A549 (cell line): ENCODE measurements at regions of chr19 and their contacts with region 1.

Region 1: GRCh38 chr19:50922317-50922853 is 11.2 kb upstream of the KLK4 start:
- DNase-seq: peak; percentile 89 to 91
- ATAC-seq: peak; percentile 97 to 100
- H3K4me3 ChIP-seq: no peak overlapping the region
- H3K27ac ChIP-seq: no peak overlapping the region
- H3K4me1 ChIP-seq: peaks cover 14% of the 10 kb centered on the region; the same call in 1 of the 3 replicates
- CTCF ChIP-seq: peak; percentile 96
- EP300 ChIP-seq: no peak
- POLR2A ChIP-seq: no peak
- RAD21 ChIP-seq: peak; percentile 95 to 97

Region 2: DNA sequence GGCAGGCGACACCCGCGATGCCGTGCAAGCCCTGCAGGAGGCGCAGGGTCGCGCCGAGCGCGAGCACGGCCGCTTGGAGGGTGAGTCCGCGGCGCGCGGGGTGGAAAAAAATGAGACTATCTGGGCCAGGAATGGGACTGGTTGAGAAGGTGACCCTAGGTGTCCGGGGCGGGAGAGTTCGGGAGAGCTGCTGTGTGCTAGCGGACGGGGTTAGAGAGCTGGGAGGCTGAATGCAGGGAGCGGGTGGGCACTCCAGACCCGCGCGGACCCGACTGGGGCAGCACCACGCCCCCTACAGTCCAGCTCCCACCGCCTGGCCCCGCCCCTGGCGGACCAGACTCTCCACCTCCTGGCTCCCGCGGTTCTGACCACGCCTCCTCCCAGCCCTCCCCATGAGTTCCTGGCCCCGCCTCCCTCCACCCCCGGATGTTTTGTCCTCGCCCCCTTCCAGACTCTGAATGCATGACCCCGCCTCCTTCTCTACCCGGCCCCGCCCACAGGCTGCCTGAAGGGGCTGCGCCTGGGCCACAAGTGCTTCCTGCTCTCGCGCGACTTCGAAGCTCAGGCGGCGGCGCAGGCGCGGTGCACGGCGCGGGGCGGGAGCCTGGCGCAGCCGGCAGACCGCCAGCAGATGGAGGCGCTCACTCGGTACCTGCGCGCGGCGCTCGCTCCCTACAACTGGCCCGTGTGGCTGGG is 197.7 kb before region 1 on chr19:
- CTCF ChIA-PET with region 1: interaction called, 59 read pairs
- POLR2A ChIA-PET with region 1: interaction called, 10 read pairs
- DNase-seq: peak; percentile 99 to 100
- ATAC-seq: peak; percentile 66 to 89
- H3K4me3 ChIP-seq: peak overlapping the region; percentile 73
- H3K27ac ChIP-seq: peak overlapping the region; percentile 86 to 92
- H3K4me1 ChIP-seq: peaks cover 14% of the 10 kb centered on the region
- CTCF ChIP-seq: peak; percentile 95
- EP300 ChIP-seq: no peak
- POLR2A ChIP-seq: peak; percentile 99
- RAD21 ChIP-seq: peak; percentile 47 to 57; a peak in 3 of 5 replicates

Region 3: DNA sequence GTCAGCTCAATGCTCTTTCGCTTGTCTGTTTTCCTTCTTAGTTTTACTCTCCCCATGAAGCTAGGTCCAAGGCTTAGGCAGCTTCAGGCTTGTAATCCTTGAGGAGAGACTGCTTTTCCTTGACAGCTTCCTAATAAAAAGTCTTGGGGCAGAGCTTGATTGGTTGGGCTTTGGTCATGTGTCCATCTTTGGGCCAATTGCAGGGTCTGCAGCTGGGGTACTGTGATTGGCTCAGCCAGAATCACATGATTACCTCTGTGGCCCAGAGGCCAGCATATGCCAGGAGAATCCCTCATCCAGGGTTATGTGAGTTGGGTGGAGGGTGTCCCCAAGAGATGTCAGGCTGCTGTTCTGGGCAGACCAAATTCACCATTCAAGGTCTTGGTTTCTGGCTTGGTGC is 106.9 kb before region 1 on chr19:
- CTCF ChIA-PET with region 1: interaction called, 25 read pairs
- POLR2A ChIA-PET with region 1: no interaction called
- DNase-seq: peak in 1 of 2 experiments; percentile 50
- ATAC-seq: peak in 1 of 2 experiments; percentile 11; a peak in 1 of 6 replicates
- H3K4me3 ChIP-seq: no peak overlapping the region
- H3K27ac ChIP-seq: no peak overlapping the region
- H3K4me1 ChIP-seq: peaks cover 7% of the 10 kb centered on the region; the same call in 1 of the 3 replicates
- CTCF ChIP-seq: no peak
- EP300 ChIP-seq: no peak
- POLR2A ChIP-seq: no peak
- RAD21 ChIP-seq: no peak

Region 4: DNA sequence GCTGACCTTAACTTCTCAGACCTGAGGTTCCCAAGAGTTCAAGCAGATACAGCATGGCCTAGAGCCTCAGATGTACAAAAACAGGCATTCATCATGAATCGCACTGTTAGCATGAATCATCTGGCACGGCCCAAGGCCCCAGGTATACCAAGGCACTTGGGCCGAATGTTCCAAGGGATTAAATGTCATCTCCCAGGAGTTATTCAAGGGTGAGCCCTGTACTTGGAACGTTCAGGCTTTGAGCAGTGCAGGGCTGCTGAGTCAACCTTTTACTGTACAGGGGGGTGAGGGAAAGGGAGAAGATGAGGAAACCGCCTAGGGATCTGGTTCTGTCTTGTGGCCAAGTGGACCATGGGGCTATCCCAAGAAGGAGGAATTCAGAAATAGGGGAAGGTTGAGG is 61.4 kb before region 1 on chr19:
- CTCF ChIA-PET with region 1: interaction called, 13 read pairs
- POLR2A ChIA-PET with region 1: no interaction called
- DNase-seq: no peak
- ATAC-seq: no peak
- H3K4me3 ChIP-seq: no peak overlapping the region
- H3K27ac ChIP-seq: no peak overlapping the region
- H3K4me1 ChIP-seq: no peaks in the 10 kb centered on the region
- CTCF ChIP-seq: no peak
- EP300 ChIP-seq: no peak
- POLR2A ChIP-seq: no peak
- RAD21 ChIP-seq: no peak

Region 5: DNA sequence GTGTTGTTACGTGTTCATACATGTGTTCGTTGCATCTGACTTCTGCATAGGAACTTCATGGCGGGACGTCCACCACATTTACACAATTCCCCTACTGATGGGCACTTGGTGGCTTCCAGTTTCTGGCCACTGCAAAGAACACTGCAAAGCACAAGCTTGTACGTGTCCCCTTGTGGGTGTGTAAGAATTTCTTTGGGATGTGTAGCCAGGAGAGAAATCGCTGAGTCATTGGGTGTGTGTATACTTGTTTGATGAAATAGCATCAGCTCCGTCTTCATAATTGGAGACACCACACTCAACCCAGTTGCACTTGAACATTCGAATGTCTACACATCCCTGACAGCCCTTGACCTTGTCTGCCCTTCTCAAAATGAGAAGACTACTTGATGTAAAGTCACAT is 11.3 kb after region 1 on chr19:
- CTCF ChIA-PET with region 1: interaction called, 36 read pairs
- POLR2A ChIA-PET with region 1: no interaction called
- DNase-seq: peak in 1 of 2 experiments; percentile 84
- ATAC-seq: peak in 1 of 2 experiments; percentile 61; a peak in 3 of 6 replicates
- H3K4me3 ChIP-seq: no peak overlapping the region
- H3K27ac ChIP-seq: peak overlapping the region; percentile 64 to 82
- H3K4me1 ChIP-seq: peaks cover 12% of the 10 kb centered on the region
- CTCF ChIP-seq: no peak
- EP300 ChIP-seq: no peak
- POLR2A ChIP-seq: no peak
- RAD21 ChIP-seq: no peak

Region 6: GRCh38 chr19:51059715-51060114 is 137.3 kb after region 1 on chr19:
- CTCF ChIA-PET with region 1: no interaction called
- POLR2A ChIA-PET with region 1: no interaction called
- DNase-seq: no peak
- ATAC-seq: no peak
- H3K4me3 ChIP-seq: no peak overlapping the region
- H3K27ac ChIP-seq: no peak overlapping the region
- H3K4me1 ChIP-seq: peaks cover 3% of the 10 kb centered on the region; the same call in 1 of the 3 replicates
- CTCF ChIP-seq: no peak
- EP300 ChIP-seq: no peak
- POLR2A ChIP-seq: no peak
- RAD21 ChIP-seq: no peak

Region 7: GRCh38 chr19:51097166-51097738 is 174.9 kb after region 1 on chr19:
- CTCF ChIA-PET with region 1: interaction called, 75 read pairs
- POLR2A ChIA-PET with region 1: no interaction called
- DNase-seq: peak; percentile 73 to 75
- ATAC-seq: peak; percentile 73 to 87
- H3K4me3 ChIP-seq: no peak overlapping the region
- H3K27ac ChIP-seq: no peak overlapping the region
- H3K4me1 ChIP-seq: peaks cover 10% of the 10 kb centered on the region; the same call in 1 of the 3 replicates
- CTCF ChIP-seq: peak; percentile 67
- EP300 ChIP-seq: no peak
- POLR2A ChIP-seq: no peak
- RAD21 ChIP-seq: peak; percentile 8 to 38; a peak in 2 of 5 replicates

Region 8: GRCh38 chr19:51136851-51137551 is 214.6 kb after region 1 on chr19:
- CTCF ChIA-PET with region 1: no interaction called
- POLR2A ChIA-PET with region 1: no interaction called
- DNase-seq: no peak
- ATAC-seq: no peak
- H3K4me3 ChIP-seq: no peak overlapping the region
- H3K27ac ChIP-seq: no peak overlapping the region
- H3K4me1 ChIP-seq: no peaks in the 10 kb centered on the region
- CTCF ChIP-seq: no peak
- EP300 ChIP-seq: no peak
- POLR2A ChIP-seq: no peak
- RAD21 ChIP-seq: no peak